Calu3 (cell line): ENCODE measurements at regions of chr11 and their contacts with region 1.

Region 1: GRCh38 chr11:72024069-72024754 is 25.5 kb downstream of the IL18BP start:
- DNase-seq: no peak
- H3K4me3 Mint-ChIP-seq: no peak overlapping the region
- H3K27ac Mint-ChIP-seq: no peak overlapping the region
- H3K4me1 Mint-ChIP-seq: peaks cover 8% of the 10 kb centered on the region
- H3K27me3 Mint-ChIP-seq: no peaks in the 10 kb centered on the region
- CTCF ChIP-seq: no peak

Region 2: DNA sequence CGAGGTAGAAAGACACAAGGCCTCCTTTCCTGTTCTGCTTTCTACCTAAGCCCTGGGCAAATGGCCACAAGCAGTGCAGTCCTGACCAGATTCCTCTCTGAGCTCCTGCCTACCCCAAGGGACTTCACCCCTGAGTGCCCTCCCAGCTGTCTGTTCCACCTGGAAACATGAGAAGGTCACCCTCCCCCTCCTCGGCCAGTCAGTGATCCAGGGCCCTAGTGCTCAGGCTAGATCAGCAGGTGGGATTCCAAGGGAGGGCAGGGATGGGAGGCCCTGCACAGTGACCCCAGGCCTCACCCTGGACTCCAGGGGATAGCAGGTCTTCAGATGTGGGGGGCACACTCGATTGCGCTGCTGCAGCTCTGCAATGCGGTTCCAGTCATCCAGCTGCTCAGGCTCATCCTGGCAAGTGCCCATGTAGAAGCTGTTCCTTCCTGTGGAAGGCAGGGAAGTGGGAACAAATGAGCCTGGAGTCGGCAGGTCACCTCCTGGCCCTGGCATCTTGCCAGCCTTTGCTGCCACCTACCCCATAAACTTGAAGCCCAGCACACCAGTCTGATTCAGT is 19.2 kb before region 1 on chr11:
- CTCF ChIA-PET with region 1: no interaction called
- intact Hi-C with region 1: no loop called
- DNase-seq: no peak
- H3K4me3 Mint-ChIP-seq: no peak overlapping the region
- H3K27ac Mint-ChIP-seq: no peak overlapping the region
- H3K4me1 Mint-ChIP-seq: no peaks in the 10 kb centered on the region
- H3K27me3 Mint-ChIP-seq: no peaks in the 10 kb centered on the region
- CTCF ChIP-seq: no peak

Region 3: GRCh38 chr11:72040726-72041441 is 16.7 kb after region 1 on chr11:
- CTCF ChIA-PET with region 1: interaction called, 14 read pairs
- intact Hi-C with region 1: no loop called
- DNase-seq: peak; percentile 86
- H3K4me3 Mint-ChIP-seq: no peak overlapping the region
- H3K27ac Mint-ChIP-seq: no peak overlapping the region
- H3K4me1 Mint-ChIP-seq: peaks cover 27% of the 10 kb centered on the region
- H3K27me3 Mint-ChIP-seq: no peaks in the 10 kb centered on the region
- CTCF ChIP-seq: no peak

Region 4: GRCh38 chr11:72091005-72091691 is 66.9 kb after region 1 on chr11:
- CTCF ChIA-PET with region 1: interaction called, 40 read pairs
- intact Hi-C with region 1: loop called (anchors 1 kb)
- DNase-seq: peak; percentile 70
- H3K4me3 Mint-ChIP-seq: no peak overlapping the region
- H3K27ac Mint-ChIP-seq: no peak overlapping the region
- H3K4me1 Mint-ChIP-seq: peaks cover 10% of the 10 kb centered on the region
- H3K27me3 Mint-ChIP-seq: no peaks in the 10 kb centered on the region
- CTCF ChIP-seq: peak; percentile 76